ENCODE measurements at regions of chr17 and their contacts with region 1.

Region 1: DNA sequence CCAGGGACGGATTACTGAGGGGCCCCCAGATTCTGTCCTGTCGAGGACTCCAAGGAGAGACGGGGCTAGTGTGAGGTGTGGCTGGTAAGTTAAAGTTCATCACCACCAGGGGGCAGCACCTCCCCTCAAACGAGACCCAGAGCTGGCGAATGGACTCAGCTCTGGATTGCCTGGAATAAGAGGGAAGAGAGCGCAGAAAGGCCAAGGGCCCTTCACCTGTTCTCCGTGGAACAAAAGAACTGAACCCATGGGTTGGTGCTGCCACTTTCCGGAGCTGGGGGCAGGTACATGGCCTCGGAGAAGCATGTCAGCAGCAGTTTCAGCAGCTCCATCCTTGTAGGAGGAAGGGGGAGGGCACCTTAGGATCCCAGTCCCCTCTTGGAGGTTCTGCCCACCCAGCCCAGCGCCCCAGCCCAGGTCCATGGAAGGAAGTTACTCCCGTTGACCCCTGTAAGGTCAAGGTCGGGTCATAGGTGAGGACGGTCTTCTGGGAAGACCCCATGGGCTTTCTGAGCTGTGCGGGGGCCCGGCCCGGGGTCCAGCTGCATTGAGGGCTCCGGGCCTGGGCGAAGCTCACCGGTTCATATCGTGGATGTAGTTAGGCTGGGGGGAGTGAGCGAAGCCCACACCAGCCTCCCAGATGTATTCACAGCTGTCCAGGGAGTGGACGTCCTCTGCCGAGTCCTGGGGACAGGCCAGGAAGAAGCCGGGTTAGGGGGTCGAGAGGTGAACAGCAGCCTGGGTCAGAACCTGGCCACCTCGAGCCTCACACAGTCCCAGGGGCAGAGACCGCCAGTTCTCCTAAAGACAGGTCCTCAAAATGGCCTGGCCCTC is 10.7 kb downstream of the HID1 start:
- DNase-seq: no peak
- H3K4me3 ChIP-seq: no peak overlapping the region
- H3K27me3 ChIP-seq: peaks cover under 1% of the 10 kb centered on the region; the same call in 1 of the 2 replicates
- CTCF ChIP-seq: peak; percentile 70

Region 2: DNA sequence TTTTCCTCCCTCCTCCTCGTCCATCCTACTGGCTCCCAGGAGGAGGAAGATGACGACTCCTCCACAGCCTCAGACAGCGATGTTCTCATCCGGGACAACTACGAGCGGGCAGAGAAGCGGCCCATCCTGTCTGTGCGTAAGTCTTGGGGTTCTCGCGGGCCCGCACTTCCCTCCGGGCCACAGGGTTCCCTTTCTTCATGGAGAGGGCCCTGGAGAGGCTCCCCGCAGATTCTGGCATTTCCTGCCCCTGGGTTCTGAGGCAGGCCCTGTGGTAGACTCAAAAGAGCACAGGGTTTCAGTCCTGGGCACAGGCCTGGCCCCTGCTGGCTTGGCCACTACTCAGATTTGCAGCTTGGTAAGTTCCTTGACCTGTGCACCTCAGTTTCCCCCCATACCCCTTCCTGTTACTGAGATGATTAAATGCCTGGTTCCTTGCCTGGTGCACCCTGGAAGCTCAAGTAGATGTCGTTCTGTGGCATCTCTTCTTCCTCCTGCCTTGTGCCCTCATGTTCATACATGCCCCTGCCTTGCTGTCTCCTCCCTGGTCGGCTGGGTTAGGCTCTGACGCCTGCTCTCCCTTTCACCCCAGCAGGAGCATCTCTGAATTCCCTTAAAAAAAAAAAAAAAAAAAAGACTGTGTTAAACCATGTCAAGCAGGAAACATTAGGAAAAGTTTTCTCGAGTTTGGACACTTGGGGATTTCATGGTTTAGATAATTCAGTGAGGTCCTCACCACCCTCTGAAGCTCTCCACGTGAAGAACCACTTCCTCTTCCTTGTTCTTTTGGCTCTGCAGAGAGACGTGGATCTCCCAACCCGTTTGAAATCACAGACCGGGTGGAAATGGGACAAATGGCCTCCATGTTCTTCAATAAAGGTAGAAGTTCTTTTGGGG is 171.5 kb before region 1 on chr17:
- CTCF ChIA-PET with region 1: interaction called, 10 read pairs
- POLR2A ChIA-PET with region 1: no interaction called
- DNase-seq: no peak
- H3K4me3 ChIP-seq: no peak overlapping the region
- H3K27me3 ChIP-seq: no peaks in the 10 kb centered on the region
- CTCF ChIP-seq: no peak

Region 3: GRCh38 chr17:74950207-74950606 is 11.7 kb before region 1 on chr17:
- CTCF ChIA-PET with region 1: interaction called, 24 read pairs
- POLR2A ChIA-PET with region 1: no interaction called
- DNase-seq: no peak
- H3K4me3 ChIP-seq: no peak overlapping the region
- H3K27me3 ChIP-seq: peaks cover 11% of the 10 kb centered on the region
- CTCF ChIP-seq: no peak

Region 4: DNA sequence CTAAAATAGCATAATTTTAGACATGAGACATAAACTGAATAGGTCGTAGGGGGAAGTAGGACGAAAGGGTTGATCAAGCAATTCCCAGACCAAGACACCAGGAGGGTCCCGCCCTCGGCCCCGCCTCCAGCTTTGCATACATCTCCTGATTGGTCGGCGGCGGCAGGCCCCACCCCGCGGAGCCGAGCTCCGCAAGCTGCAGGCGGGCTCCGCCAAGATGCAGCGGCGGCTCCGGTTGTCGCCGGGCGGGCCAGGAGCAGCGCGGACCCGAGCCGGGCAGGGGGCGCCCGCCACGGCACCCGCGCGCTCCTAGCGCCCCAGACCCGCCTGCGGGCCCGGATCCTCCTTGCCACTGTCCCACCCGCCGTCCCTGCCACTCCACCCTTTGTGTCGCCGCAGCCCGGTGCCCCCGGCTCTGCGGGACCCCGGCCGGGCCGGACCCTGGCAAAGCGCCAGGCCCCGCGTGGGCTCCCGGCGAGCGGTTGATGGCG is 25.6 kb after region 1 on chr17 and contains the start of gene CDR2L:
- CTCF ChIA-PET with region 1: interaction called, 19 read pairs
- POLR2A ChIA-PET with region 1: no interaction called
- DNase-seq: peak; percentile 70
- H3K4me3 ChIP-seq: peak within 1 kb of the TSS; percentile 82
- H3K27me3 ChIP-seq: no peaks in the 10 kb centered on the region
- CTCF ChIP-seq: no peak
- polyA plus RNA-seq, gene CDR2L: 12.5 and 19.6 TPM in 2 replicates

Region 5: GRCh38 chr17:75034236-75034908 is 72.5 kb after region 1 on chr17:
- CTCF ChIA-PET with region 1: interaction called, 16 read pairs
- POLR2A ChIA-PET with region 1: no interaction called
- DNase-seq: no peak
- H3K4me3 ChIP-seq: peak overlapping the region; percentile 56
- H3K27me3 ChIP-seq: no peaks in the 10 kb centered on the region
- CTCF ChIP-seq: peak; percentile 28; the same call in 1 of the 2 replicates

Region 6: DNA sequence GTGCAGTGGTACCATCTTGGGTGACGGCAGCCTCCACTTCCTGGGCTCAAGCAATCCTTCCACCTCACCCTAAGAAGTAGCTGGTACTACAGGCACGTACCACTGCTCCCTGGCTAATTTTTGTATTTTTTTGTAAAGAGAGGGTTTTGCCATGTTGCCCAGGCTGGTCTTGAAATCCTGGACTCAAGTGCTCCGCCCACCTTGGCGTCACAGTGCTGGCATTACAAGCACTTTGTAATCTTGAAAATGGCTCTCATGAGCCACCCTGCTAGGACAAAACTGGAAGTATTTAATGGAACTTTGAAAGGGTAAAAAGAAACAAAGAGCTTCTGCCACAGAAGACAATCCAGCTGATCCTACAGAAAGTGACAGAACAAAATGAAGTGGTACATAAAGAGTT is 211.7 kb after region 1 on chr17:
- CTCF ChIA-PET with region 1: interaction called, 12 read pairs
- POLR2A ChIA-PET with region 1: no interaction called
- DNase-seq: no peak
- H3K4me3 ChIP-seq: no peak overlapping the region
- H3K27me3 ChIP-seq: no peaks in the 10 kb centered on the region
- CTCF ChIP-seq: no peak

Region 7: GRCh38 chr17:75380315-75380714 is 418.4 kb after region 1 on chr17:
- CTCF ChIA-PET with region 1: no interaction called
- POLR2A ChIA-PET with region 1: no interaction called
- DNase-seq: no peak
- H3K4me3 ChIP-seq: no peak overlapping the region
- H3K27me3 ChIP-seq: no peaks in the 10 kb centered on the region
- CTCF ChIP-seq: no peak

Measured in BJ (cell line).